BJ (cell line): ENCODE measurements at regions of chr20 and their contacts with region 1.

Region 1: GRCh38 chr20:561437-562231 is 18.0 kb upstream of the CSNK2A1 start:
- DNase-seq: no peak
- H3K4me3 ChIP-seq: no peak overlapping the region
- H3K27me3 ChIP-seq: peaks cover 6% of the 10 kb centered on the region; the same call in 1 of the 2 replicates
- CTCF ChIP-seq: peak; percentile 97

Region 2: GRCh38 chr20:728248-728944 is 166.8 kb after region 1 on chr20:
- CTCF ChIA-PET with region 1: interaction called, 12 read pairs
- POLR2A ChIA-PET with region 1: no interaction called
- DNase-seq: no peak
- H3K4me3 ChIP-seq: peak overlapping the region; percentile 33
- H3K27me3 ChIP-seq: peaks cover 24% of the 10 kb centered on the region
- CTCF ChIP-seq: peak; percentile 64